ENCODE measurements at regions of chr2 and their contacts with region 1.

Region 1: DNA sequence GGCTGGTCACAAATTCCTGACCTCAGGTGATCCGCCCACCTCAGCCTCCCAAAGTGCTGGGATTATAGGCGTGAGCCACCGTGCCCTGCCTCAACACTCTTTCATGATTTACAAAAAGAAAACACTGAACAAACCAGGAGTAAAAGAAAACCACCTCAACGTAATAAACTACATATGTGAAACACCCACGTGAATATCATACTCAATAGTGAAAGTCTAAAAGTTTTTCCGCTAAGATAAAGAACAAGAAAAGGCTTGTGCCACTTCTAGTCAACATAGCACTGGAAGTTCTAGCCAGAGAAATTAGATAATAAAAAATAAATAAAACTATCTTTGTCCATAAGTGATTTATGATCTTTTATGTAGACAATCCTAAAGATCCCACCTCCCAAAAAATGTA is 68.5 kb downstream of the ROCK2 start:
- DNase-seq: no peak
- ATAC-seq: no peak
- H3K4me3 ChIP-seq: no peak overlapping the region
- H3K27ac ChIP-seq: no peak overlapping the region
- H3K4me1 ChIP-seq: peaks cover 12 to 16% of the 10 kb centered on the region in 2 experiments
- H3K27me3 ChIP-seq: no peaks in the 10 kb centered on the region
- CTCF ChIP-seq: no peak
- EP300 ChIP-seq: no peak
- POLR2A ChIP-seq: no peak
- RAD21 ChIP-seq: no peak

Region 2: GRCh38 chr2:11242542-11243174 is 33.3 kb before region 1 on chr2:
- CTCF ChIA-PET with region 1: no interaction called
- POLR2A ChIA-PET with region 1: no interaction called
- in situ Hi-C with region 1: no loop called
- intact Hi-C with region 1: loop called (anchors 1 kb)
- DNase-seq: peak in 1 of 4 experiments; percentile 29
- ATAC-seq: peak; percentile 71
- H3K4me3 ChIP-seq: no peak overlapping the region
- H3K27ac ChIP-seq: no peak overlapping the region
- H3K4me1 ChIP-seq: peaks cover 0 to 6% of the 10 kb centered on the region in 2 experiments; a peak in 2 of 5 replicates
- H3K27me3 ChIP-seq: no peaks in the 10 kb centered on the region
- CTCF ChIP-seq: no peak
- EP300 ChIP-seq: no peak
- POLR2A ChIP-seq: no peak
- RAD21 ChIP-seq: no peak

Region 3: GRCh38 chr2:11387854-11388692 is 112.2 kb after region 1 on chr2:
- CTCF ChIA-PET with region 1: no interaction called
- POLR2A ChIA-PET with region 1: no interaction called
- in situ Hi-C with region 1: no loop called
- intact Hi-C with region 1: no loop called
- DNase-seq: no peak
- ATAC-seq: no peak
- H3K4me3 ChIP-seq: no peak overlapping the region
- H3K27ac ChIP-seq: no peak overlapping the region
- H3K4me1 ChIP-seq: peaks cover 0 to 6% of the 10 kb centered on the region in 2 experiments; a peak in 3 of 5 replicates
- H3K27me3 ChIP-seq: no peaks in the 10 kb centered on the region
- CTCF ChIP-seq: no peak
- EP300 ChIP-seq: no peak
- POLR2A ChIP-seq: no peak
- RAD21 ChIP-seq: no peak

Region 4: GRCh38 chr2:11863513-11864328 is 587.8 kb after region 1 on chr2:
- CTCF ChIA-PET with region 1: no interaction called
- POLR2A ChIA-PET with region 1: no interaction called
- in situ Hi-C with region 1: no loop called
- intact Hi-C with region 1: no loop called
- DNase-seq: peak; percentile 89 to 90 (median 90)
- ATAC-seq: peak; percentile 87
- H3K4me3 ChIP-seq: no peak overlapping the region
- H3K27ac ChIP-seq: peak overlapping the region; percentile 4; the same call in 1 of the 3 replicates
- H3K4me1 ChIP-seq: peaks cover 12 to 43% of the 10 kb centered on the region in 2 experiments
- H3K27me3 ChIP-seq: no peaks in the 10 kb centered on the region
- CTCF ChIP-seq: peak; percentile 85 to 94 (median 87)
- EP300 ChIP-seq: peak; percentile 20; the same call in 1 of the 2 replicates
- POLR2A ChIP-seq: no peak
- RAD21 ChIP-seq: peak; percentile 92 to 93

Region 5: DNA sequence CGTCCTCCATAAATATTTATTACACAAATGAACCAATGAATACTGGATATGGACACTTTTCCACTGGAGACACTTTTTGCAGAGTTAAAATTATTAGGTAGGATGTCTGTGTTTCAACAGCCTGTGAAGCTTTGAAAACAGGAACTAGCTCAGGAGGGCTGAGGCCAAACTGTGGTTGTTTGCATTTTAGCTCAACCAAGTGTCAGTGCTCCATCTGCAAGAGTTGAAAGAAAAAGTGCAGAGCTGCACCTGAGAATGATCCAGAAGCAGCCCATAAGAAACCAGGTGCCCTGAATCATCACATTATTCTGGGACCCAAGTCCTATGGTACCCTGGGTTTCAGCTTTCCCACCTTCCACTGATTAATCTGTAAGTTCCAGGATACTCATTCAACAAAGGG is 1621.3 kb after region 1 on chr2:
- CTCF ChIA-PET with region 1: no interaction called
- POLR2A ChIA-PET with region 1: no interaction called
- in situ Hi-C with region 1: no loop called
- intact Hi-C with region 1: no loop called
- DNase-seq: no peak
- ATAC-seq: no peak
- H3K4me3 ChIP-seq: no peak overlapping the region
- H3K27ac ChIP-seq: no peak overlapping the region
- H3K4me1 ChIP-seq: no peaks in the 10 kb centered on the region
- H3K27me3 ChIP-seq: no peaks in the 10 kb centered on the region
- CTCF ChIP-seq: no peak
- EP300 ChIP-seq: no peak
- POLR2A ChIP-seq: no peak
- RAD21 ChIP-seq: no peak